Activated naive CD4-positive, alpha-beta T cell treated with anti-CD3 and anti-CD28 coated beads for 36 hours (primary cell): ENCODE measurements at regions of chr17 and their contacts with region 1.

Region 1: GRCh38 chr17:14118951-14119350 is 49.6 kb downstream of the COX10 start:
- DNase-seq: peak; percentile 37
- H3K4me3 Mint-ChIP-seq: no peak overlapping the region
- H3K27ac Mint-ChIP-seq: peak overlapping the region; percentile 96
- H3K4me1 Mint-ChIP-seq: peaks cover 88% of the 10 kb centered on the region
- H3K27me3 Mint-ChIP-seq: no peaks in the 10 kb centered on the region

Region 2: DNA sequence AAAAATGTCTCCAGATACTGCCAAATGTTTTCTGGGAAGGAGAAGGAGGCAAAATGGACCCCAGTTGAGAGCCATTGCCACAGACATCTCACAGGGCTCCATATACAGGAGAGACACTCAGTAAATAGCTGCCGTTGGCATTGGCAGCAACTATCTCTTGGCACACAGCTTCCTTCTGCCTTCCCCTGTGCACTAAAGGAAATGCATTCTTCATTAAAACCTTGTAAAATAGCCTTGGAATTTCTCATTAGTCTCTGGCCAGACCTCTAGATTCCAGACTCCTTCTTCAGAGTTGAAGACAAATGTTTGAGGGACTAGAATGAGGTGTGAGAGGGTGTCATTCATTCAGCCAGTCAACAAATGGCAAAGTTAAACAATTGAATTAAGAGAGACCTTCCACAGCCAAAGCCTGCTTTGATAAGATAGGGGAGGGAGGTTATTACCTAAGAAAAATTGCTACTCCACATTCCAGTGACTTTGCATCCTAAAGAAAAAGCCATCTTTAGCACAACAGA is 293.4 kb before region 1 on chr17:
- CTCF ChIA-PET with region 1: no interaction called
- intact Hi-C with region 1: loop called (anchors 1 kb)
- DNase-seq: no peak
- H3K4me3 Mint-ChIP-seq: no peak overlapping the region
- H3K27ac Mint-ChIP-seq: no peak overlapping the region
- H3K4me1 Mint-ChIP-seq: peaks cover 4% of the 10 kb centered on the region
- H3K27me3 Mint-ChIP-seq: no peaks in the 10 kb centered on the region

Region 3: DNA sequence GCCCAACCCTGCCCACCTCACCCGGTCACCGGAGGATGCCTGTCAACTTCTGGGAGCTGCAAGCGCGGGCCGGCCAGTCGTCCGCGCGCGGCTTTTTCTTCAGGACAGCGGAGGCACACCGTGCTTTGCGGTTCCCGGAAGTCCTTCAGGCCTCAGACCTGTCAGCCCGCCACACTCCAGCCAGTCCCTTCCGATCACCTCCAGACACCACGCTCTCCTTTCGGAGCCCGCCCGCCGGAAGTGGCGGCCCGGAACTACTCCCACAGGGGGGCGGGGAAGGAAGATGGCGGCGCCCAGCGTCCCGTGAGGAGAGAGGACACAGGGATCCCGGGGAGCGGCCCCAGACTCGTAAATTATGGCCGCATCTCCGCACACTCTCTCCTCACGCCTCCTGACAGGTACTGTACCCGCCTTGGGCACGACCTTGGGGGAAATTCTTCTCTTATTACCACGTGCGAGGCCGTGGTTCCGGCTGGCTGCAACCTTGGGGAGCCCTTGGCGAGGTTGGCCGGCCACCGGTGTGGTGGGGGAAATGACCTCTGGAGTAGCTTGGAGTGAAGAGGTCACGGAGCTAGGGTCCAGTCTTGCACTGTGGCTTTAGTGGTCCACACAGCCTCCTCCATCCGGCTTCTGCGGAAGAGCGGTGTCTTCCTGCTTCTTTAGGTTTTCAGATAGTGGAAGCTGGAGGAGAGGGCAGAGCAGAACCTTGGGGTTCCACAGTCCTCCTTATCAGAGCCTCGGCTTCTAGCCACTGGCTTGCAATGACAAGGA is 49.5 kb before region 1 on chr17 and contains the start of gene COX10:
- CTCF ChIA-PET with region 1: no interaction called
- intact Hi-C with region 1: loop called (anchors 2 kb)
- DNase-seq: peak; percentile 88
- H3K4me3 Mint-ChIP-seq: peak within 1 kb of the TSS; percentile 94
- H3K27ac Mint-ChIP-seq: peak within 1 kb of the TSS; percentile 87
- H3K4me1 Mint-ChIP-seq: peaks cover 67% of the 10 kb centered on the region
- H3K27me3 Mint-ChIP-seq: no peaks in the 10 kb centered on the region
- total RNA-seq, gene COX10: 29.9 to 30.6 TPM

Region 4: DNA sequence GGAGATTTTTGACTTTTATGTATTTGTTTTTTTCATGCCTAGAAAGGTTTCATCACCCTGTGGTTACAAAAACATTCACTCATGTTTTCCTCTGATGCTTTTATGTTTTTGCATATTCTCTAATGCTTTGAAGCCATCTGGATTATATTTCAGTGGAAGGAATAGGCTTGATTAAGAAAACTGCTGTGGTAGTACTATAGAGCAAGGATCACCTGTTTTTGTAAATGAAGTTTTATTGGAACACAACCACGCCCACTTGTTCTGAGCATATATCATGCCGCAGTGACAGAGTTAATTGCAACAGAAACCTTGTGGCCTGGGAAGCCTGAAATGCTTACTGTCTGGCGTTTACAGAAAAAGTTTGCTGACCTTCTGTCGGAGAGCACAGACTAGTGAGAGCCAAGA is 38.1 kb before region 1 on chr17:
- CTCF ChIA-PET with region 1: no interaction called
- intact Hi-C with region 1: no loop called
- DNase-seq: no peak
- H3K4me3 Mint-ChIP-seq: no peak overlapping the region
- H3K27ac Mint-ChIP-seq: no peak overlapping the region
- H3K4me1 Mint-ChIP-seq: peaks cover 5% of the 10 kb centered on the region
- H3K27me3 Mint-ChIP-seq: no peaks in the 10 kb centered on the region

Region 5: DNA sequence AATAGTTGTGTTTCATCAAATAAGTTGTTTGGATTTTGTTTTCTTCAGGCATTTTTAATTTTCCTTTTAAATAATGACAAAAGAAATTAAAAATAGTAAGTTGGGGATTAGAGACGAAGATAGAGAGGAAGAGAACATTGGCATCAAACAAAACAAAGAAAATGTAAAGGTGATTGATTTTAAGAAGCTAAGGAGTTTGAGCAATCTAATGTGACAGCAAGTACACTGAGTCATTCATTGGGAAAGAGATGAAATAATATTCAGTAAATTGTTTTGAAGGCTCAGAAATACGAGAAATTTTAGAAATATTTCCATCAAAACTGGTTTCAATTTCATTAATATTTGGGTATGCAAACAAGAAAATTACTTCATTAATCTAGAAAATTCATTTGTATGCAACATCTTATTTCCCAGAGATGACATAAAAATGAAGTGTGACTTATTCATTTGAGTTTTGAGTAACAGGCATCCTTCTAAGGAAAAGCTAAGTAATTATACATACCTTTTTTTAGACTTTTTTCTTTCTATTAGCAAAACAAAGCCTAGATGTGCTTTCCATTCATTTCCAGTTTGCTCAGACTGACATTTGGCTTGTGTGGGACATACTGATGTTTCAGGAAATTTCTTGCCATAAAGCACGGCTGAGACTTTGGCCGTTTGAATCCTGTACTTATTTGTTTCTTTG is 17.1 kb after region 1 on chr17:
- CTCF ChIA-PET with region 1: interaction called, 3 read pairs
- intact Hi-C with region 1: loop called (anchors 1 kb)
- DNase-seq: no peak
- H3K4me3 Mint-ChIP-seq: peak overlapping the region; percentile 38
- H3K27ac Mint-ChIP-seq: peak overlapping the region; percentile 91
- H3K4me1 Mint-ChIP-seq: peaks cover 31% of the 10 kb centered on the region
- H3K27me3 Mint-ChIP-seq: no peaks in the 10 kb centered on the region

Region 6: DNA sequence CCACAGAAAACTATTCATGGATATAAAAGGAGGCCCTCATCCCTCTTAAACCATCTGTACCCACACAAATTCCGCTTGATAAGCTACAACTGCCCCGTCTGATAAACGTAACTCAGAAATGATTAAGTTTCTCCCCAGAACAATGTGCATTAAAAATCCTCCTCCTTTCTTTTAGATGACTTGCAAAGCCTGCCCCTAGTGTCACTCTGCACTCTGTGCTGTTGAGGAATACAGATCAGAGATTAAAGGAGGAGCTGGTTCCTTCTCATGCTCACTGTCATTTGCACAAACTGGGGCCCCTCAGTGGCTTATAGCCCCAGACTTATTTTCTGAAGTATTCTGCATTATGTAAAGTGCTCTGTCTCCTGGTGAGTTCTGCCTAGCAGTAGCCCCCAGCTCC is 84.4 kb after region 1 on chr17:
- CTCF ChIA-PET with region 1: no interaction called
- intact Hi-C with region 1: loop called (anchors 1 kb)
- DNase-seq: peak; percentile 67
- H3K4me3 Mint-ChIP-seq: no peak overlapping the region
- H3K27ac Mint-ChIP-seq: peak overlapping the region; percentile 94
- H3K4me1 Mint-ChIP-seq: peaks cover 85% of the 10 kb centered on the region
- H3K27me3 Mint-ChIP-seq: no peaks in the 10 kb centered on the region

Region 7: GRCh38 chr17:14228903-14229302 is 110.0 kb after region 1 on chr17:
- CTCF ChIA-PET with region 1: no interaction called
- intact Hi-C with region 1: no loop called
- DNase-seq: no peak
- H3K4me3 Mint-ChIP-seq: no peak overlapping the region
- H3K27ac Mint-ChIP-seq: no peak overlapping the region
- H3K4me1 Mint-ChIP-seq: no peaks in the 10 kb centered on the region
- H3K27me3 Mint-ChIP-seq: no peaks in the 10 kb centered on the region

Region 8: DNA sequence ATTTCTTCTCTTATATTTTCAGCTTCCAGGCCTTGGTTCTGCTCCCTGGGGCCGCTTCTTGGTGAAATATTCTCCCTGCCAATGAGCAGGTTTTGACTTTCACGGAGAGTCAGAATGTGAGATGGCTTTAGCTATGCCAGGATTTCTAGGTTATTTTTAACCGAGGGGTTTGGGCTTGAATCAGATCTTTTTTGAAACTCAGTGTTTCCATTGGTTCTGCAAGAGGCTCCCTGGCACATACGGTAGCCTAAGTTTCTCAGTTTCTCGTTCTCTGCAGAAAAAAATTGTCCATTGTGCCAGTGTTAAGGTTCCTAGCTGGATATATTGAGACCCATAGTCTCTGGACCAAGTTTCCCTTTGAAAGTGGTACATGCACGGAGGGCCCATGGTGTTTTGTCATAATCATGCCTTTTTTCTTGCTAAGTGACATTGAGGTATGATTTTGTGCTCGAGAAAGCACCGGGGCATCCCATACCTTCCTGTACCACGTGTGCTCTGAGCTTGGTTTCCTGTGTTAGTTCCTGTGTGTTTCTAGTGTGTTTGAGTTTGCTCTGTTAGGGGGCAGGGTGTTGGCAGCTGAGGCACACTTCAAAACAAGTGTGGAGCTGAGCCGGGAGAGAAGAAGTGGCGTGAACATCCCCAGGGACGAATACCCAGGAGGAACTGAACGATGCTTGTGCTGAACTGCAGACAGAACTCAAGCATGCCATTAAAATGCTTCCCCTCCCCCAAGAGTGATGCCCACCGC is 309.1 kb after region 1 on chr17:
- CTCF ChIA-PET with region 1: no interaction called
- intact Hi-C with region 1: loop called (anchors 5 kb)
- DNase-seq: peak; percentile 78
- H3K4me3 Mint-ChIP-seq: peak overlapping the region; percentile 56
- H3K27ac Mint-ChIP-seq: peak overlapping the region; percentile 78
- H3K4me1 Mint-ChIP-seq: peaks cover 60% of the 10 kb centered on the region
- H3K27me3 Mint-ChIP-seq: no peaks in the 10 kb centered on the region